Common myeloid progenitor, CD34-positive (primary cell): ENCODE measurements at regions of chr11 and their contacts with region 1.

Region 1: DNA sequence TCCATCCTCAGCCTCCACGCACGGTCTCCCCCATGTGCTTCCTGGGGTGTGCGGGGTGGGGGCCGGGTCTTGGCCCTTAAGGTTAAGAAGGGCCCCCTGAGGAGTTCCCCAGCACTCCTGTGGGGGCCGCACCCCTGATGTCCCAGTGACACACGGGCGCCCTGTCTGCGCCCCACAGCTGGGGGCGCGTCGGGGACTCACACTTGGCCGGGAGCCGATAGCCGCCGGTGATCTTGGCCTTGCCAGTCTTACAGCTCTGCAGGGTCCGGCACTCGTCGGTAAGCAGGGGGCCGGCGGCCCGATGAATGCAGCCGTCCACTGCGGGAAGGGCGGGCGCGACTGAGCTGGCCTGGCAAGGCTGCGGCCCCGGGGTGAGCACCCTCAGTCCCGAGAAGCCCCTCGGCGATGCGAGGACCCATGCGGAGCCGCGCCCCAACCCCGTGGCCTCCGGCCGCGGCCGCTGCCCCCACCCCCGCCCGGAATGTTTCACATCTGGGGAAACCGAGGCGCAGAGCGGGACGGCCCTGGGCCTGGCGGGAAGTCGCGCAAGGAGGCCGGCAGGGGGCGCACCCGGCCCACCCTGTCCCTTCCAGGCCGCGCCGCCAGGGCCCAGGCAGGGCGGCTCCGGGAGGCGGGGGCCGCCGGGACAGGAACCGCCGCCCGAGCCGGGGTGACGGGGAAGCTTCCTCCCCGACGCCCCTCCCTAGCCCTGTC is 13.9 kb downstream of the OTUB1 start:
- DNase-seq: peak; percentile 79 to 84 (median 82)
- H3K4me3 ChIP-seq: peak overlapping the region in 4 of 7 experiments; percentile 19 to 61 (median 54)
- H3K27ac ChIP-seq: no peak overlapping the region
- H3K4me1 ChIP-seq: peaks cover 0 to 53% (median 39%) of the 10 kb centered on the region in 4 experiments
- H3K27me3 ChIP-seq: peaks cover 0 to 61% (median 3%) of the 10 kb centered on the region in 5 experiments

Region 2: DNA sequence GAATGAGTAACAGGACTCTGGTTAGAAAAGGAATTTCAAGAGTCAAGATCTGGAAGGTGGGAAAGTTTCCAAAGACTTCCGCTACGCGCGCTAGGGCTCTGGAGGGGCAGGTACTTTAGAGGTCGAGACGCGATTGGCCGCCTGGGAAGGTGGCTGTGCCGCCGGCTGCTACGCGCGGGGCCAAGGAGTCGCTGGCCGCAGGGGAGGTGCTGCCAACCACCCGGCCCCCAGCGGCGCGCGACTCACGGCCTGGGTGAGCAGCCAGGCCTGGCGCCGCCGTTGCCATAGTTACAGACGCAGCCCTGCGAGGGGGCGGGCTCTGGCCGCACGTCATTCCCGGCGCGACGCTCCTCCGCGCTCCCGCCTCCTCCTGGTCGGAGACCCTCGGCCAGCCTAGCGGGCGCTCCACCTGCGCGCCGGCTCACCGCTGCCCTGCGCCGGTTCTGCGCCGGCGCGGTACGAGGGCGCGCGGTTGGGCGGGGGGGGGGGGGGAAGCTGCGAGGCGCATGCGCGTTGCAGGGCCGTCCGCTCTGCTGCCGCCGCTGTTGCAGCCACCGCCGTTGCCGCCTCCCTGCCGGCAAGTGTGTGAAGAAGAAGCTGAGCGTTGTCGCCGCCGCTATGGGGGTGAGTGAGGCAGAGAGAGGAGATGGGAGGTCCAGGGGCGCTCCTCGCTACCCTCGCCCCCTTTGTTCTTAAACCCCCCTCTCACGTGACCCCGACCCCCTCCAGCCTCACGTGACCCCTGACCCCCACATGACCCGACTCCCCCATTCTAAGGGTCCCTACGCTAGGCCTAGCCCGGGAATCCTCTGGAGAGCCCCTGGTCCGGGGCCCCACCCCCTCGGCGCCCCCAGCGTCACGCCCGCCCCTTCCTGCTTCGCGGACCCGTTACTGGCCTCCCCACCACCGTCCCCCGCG is 61.4 kb before region 1 on chr11 and contains the start of gene NAA40:
- CTCF ChIA-PET with region 1: no interaction called
- POLR2A ChIA-PET with region 1: no interaction called
- DNase-seq: peak; percentile 97 to 99 (median 99)
- H3K4me3 ChIP-seq: peak within 1 kb of the TSS; percentile 48 to 92 (median 84)
- H3K27ac ChIP-seq: peak within 1 kb of the TSS; percentile 58 to 82
- H3K4me1 ChIP-seq: peaks cover 8 to 33% (median 30%) of the 10 kb centered on the region in 4 experiments
- H3K27me3 ChIP-seq: no peaks in the 10 kb centered on the region

Region 3: GRCh38 chr11:63986156-63986931 is 13.8 kb before region 1 on chr11 and contains the start of gene OTUB1:
- CTCF ChIA-PET with region 1: interaction called, 32 read pairs
- POLR2A ChIA-PET with region 1: interaction called, 3 read pairs
- DNase-seq: peak; percentile 89 to 91 (median 90)
- H3K4me3 ChIP-seq: peak within 1 kb of the TSS; percentile 56 to 95 (median 86)
- H3K27ac ChIP-seq: peak within 1 kb of the TSS; percentile 61 to 90
- H3K4me1 ChIP-seq: peaks cover 0 to 38% (median 32%) of the 10 kb centered on the region in 4 experiments
- H3K27me3 ChIP-seq: no peaks in the 10 kb centered on the region

Region 4: DNA sequence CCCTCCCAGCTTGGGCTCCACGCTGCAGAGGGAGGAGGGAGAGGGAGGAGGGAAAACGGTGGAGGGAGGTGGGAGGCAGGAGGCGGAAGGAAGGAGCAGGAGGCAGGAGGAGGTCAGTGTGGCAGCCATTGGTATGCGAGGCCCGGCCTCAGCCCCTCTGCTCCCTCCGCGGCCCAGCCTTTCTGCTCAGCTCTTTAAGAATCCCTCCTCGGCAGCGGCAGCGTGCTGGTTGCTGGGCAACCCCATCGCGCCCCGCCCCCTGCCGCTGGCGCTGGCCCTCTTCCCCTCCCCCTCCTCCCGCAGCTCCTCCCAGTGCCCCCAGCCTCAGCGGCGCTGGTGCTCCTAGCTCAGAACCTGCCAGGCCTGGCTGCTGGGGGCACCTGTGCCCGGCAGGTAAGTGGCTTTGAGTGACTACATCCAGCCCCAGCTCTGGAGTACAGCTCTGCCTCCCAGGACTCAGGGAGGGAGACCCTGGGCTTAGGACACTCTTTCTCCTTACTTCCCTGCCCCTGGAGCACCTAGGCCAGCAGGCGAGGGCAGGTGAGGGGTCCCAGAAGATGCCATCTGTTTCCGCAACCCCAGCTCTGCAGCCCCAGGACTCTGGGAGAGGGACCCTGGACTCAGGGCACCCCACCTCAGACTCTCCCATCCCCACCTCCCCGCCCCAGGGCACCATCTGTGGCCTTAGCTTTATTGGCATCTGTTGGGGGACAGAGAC is 28.4 kb after region 1 on chr11:
- CTCF ChIA-PET with region 1: interaction called, 34 read pairs
- POLR2A ChIA-PET with region 1: no interaction called
- DNase-seq: peak; percentile 24 to 54 (median 48)
- H3K4me3 ChIP-seq: peak overlapping the region in 3 of 7 experiments; percentile 15 to 58 (median 36)
- H3K27ac ChIP-seq: no peak overlapping the region
- H3K4me1 ChIP-seq: peaks cover 2 to 25% (median 19%) of the 10 kb centered on the region in 4 experiments
- H3K27me3 ChIP-seq: peaks cover 0 to 22% (median 6%) of the 10 kb centered on the region in 5 experiments

Region 5: GRCh38 chr11:64036087-64037026 is 36.2 kb after region 1 on chr11:
- CTCF ChIA-PET with region 1: interaction called, 28 read pairs
- POLR2A ChIA-PET with region 1: interaction called, 6 read pairs
- DNase-seq: peak; percentile 30 to 80 (median 67)
- H3K4me3 ChIP-seq: peak overlapping the region; percentile 28 to 70 (median 49)
- H3K27ac ChIP-seq: no peak overlapping the region
- H3K4me1 ChIP-seq: peaks cover 0 to 31% (median 24%) of the 10 kb centered on the region in 4 experiments
- H3K27me3 ChIP-seq: peaks cover 0 to 72% (median 25%) of the 10 kb centered on the region in 5 experiments

Region 6: GRCh38 chr11:64396079-64396591 is 396.0 kb after region 1 on chr11:
- CTCF ChIA-PET with region 1: no interaction called
- POLR2A ChIA-PET with region 1: no interaction called
- DNase-seq: peak in 1 of 3 donors; percentile 33
- H3K4me3 ChIP-seq: no peak overlapping the region
- H3K27ac ChIP-seq: no peak overlapping the region
- H3K4me1 ChIP-seq: peaks cover 0 to 25% (median 12%) of the 10 kb centered on the region in 4 experiments
- H3K27me3 ChIP-seq: peaks cover 0 to 8% (median 0%) of the 10 kb centered on the region in 5 experiments